Activated CD4-positive, alpha-beta memory T cell treated with anti-CD3 and anti-CD28 coated beads, Interleukin-2, amount 10 ng/mL, durations not matched to agents 7 days and 5 days (primary cell): ENCODE measurements at regions of chr4 and their contacts with region 1.

Region 1: GRCh38 chr4:103075901-103076739 is 441 bp downstream of the SLC9B2 start:
- DNase-seq: peak; percentile 66
- H3K4me3 Mint-ChIP-seq: peak overlapping the region; percentile 86
- H3K27ac Mint-ChIP-seq: peak overlapping the region; percentile 92
- H3K4me1 Mint-ChIP-seq: peaks cover 47% of the 10 kb centered on the region
- H3K27me3 Mint-ChIP-seq: no peaks in the 10 kb centered on the region

Region 2: GRCh38 chr4:103091601-103092223 is 15.6 kb after region 1 on chr4:
- CTCF ChIA-PET with region 1: interaction called, 98 read pairs
- POLR2A ChIA-PET with region 1: interaction called, 31 read pairs
- DNase-seq: peak; percentile 56
- H3K4me3 Mint-ChIP-seq: peak overlapping the region; percentile 65
- H3K27ac Mint-ChIP-seq: peak overlapping the region; percentile 75
- H3K4me1 Mint-ChIP-seq: peaks cover 31% of the 10 kb centered on the region
- H3K27me3 Mint-ChIP-seq: no peaks in the 10 kb centered on the region

Region 3: GRCh38 chr4:103099691-103100392 is 23.7 kb after region 1 on chr4 and contains the start of gene BDH2:
- CTCF ChIA-PET with region 1: interaction called, 98 read pairs
- POLR2A ChIA-PET with region 1: interaction called, 9 read pairs
- DNase-seq: peak; percentile 42
- H3K4me3 Mint-ChIP-seq: peak within 1 kb of the TSS; percentile 76
- H3K27ac Mint-ChIP-seq: peak within 1 kb of the TSS; percentile 76
- H3K4me1 Mint-ChIP-seq: peaks cover 21% of the 10 kb centered on the region
- H3K27me3 Mint-ChIP-seq: no peaks in the 10 kb centered on the region
- total RNA-seq, gene BDH2: 22.5 to 23.6 TPM

Region 4: GRCh38 chr4:103137446-103137827 is 61.3 kb after region 1 on chr4:
- CTCF ChIA-PET with region 1: no interaction called
- POLR2A ChIA-PET with region 1: no interaction called
- DNase-seq: no peak
- H3K4me3 Mint-ChIP-seq: no peak overlapping the region
- H3K27ac Mint-ChIP-seq: no peak overlapping the region
- H3K4me1 Mint-ChIP-seq: peaks cover 9% of the 10 kb centered on the region
- H3K27me3 Mint-ChIP-seq: no peaks in the 10 kb centered on the region